ENCODE measurements at regions of chr4 and their contacts with region 1.

Region 1: GRCh38 chr4:93897559-93897958 is 69.0 kb downstream of the ATOH1 start:
- DNase-seq: no peak
- H3K4me3 Mint-ChIP-seq: no peak overlapping the region
- H3K27ac Mint-ChIP-seq: no peak overlapping the region
- H3K4me1 Mint-ChIP-seq: no peaks in the 10 kb centered on the region
- H3K27me3 Mint-ChIP-seq: no peaks in the 10 kb centered on the region
- CTCF ChIP-seq: no peak

Region 2: GRCh38 chr4:94063084-94063483 is 165.5 kb after region 1 on chr4:
- CTCF ChIA-PET with region 1: no interaction called
- intact Hi-C with region 1: no loop called
- DNase-seq: no peak
- H3K4me3 Mint-ChIP-seq: no peak overlapping the region
- H3K27ac Mint-ChIP-seq: no peak overlapping the region
- H3K4me1 Mint-ChIP-seq: no peaks in the 10 kb centered on the region
- H3K27me3 Mint-ChIP-seq: no peaks in the 10 kb centered on the region
- CTCF ChIP-seq: no peak

Region 3: DNA sequence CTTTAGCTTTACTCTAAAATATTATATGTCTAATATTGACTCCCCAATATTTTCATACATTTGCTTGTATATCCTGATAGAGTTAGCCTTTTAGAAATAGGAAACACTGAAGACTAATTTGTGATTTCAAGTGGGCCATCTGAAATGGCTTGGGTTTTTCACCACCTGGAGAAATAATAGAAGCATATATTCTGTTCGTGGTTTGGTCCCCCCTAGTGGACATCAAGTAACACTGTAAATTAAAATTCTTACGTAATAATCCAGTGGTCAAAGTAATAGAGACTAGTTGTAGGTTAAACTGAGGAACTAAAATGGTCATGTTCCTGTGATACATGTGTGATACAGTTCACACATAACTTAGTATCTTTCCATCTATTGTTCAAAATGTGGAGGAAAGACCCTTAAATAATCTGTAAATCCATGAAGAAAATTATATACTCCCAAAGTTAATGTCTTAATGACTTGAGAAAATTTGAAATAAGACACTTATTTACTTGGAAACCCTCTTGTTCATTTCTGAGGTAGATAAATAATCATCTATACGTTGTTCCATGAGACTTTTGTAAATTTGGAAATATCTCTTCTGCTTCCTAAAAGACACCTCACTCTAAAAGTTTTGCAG is 230.3 kb after region 1 on chr4:
- CTCF ChIA-PET with region 1: no interaction called
- intact Hi-C with region 1: loop called (anchors 2 kb)
- DNase-seq: peak; percentile 21
- H3K4me3 Mint-ChIP-seq: no peak overlapping the region
- H3K27ac Mint-ChIP-seq: no peak overlapping the region
- H3K4me1 Mint-ChIP-seq: no peaks in the 10 kb centered on the region
- H3K27me3 Mint-ChIP-seq: no peaks in the 10 kb centered on the region
- CTCF ChIP-seq: peak; percentile 44

Region 4: DNA sequence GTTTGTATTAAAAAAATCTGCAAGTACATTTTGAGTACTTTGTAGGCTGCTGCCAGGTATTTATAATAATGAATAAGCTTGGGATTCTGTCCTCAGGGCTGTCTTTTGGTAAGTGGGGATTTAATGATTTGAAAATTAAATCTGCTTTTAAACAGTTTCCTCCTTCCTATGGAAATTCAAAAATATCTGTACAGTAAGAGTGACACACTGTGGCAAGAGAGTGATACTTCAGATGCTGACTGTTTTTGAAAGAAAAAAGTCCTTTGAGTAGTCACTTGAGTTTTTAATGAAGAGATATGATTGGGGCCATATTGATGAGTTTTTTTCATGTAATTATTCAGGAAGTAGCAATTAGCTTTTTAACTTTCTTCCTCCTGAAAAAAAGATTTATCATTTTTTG is 359.3 kb after region 1 on chr4:
- CTCF ChIA-PET with region 1: no interaction called
- intact Hi-C with region 1: loop called (anchors 2 kb)
- DNase-seq: no peak
- H3K4me3 Mint-ChIP-seq: no peak overlapping the region
- H3K27ac Mint-ChIP-seq: no peak overlapping the region
- H3K4me1 Mint-ChIP-seq: no peaks in the 10 kb centered on the region
- H3K27me3 Mint-ChIP-seq: no peaks in the 10 kb centered on the region
- CTCF ChIP-seq: no peak

Measured in Calu3 (cell line).